Esophagus squamous epithelium (tissue), 5 donors: ENCODE measurements at regions of chr14 and their contacts with region 1.

Region 1: GRCh38 chr14:55277972-55278740 is 6.9 kb downstream of the FBXO34 start:
- DNase-seq: no peak
- H3K4me3 ChIP-seq: no peak overlapping the region
- H3K27ac ChIP-seq: peak overlapping the region in 1 of 4 donors; percentile 28
- H3K4me1 ChIP-seq: peaks cover 12 to 56% (median 19%) of the 10 kb centered on the region in 3 donors
- H3K27me3 ChIP-seq: no peaks in the 10 kb centered on the region
- CTCF ChIP-seq: no peak
- POLR2A ChIP-seq: no peak

Region 2: DNA sequence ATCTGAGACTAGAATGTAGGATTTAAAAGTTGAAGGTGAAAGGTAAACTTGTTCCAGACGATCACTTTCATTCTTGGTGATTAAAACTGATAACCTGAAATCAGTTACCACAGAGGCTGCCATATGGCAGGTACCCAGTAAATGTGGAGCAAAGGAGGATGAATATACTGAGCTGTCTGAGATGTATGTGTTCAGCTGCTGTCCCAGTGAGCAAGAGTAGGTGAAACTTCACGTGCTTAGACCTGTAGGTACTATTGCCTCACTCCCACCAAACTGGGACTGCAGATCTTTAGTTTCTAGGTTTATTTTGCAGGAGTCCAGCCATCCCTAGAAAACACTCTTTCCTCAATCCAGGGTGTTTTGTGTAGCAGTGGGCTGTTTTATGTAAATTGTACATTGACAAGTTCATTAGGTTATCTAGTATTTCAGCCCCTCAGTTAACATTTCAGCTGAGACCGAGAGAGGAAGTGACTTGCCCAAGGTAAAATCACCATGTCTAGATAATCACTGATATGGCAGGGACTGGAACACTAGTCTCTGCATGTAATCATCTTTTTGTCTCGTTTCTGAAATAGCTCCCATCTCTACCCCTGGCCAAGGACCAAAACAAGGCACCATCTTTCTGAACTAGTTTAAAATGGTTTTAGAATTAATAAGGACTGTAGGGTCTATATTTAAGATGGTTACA is 70.8 kb after region 1 on chr14:
- intact Hi-C with region 1: loop called (anchors 2 kb)
- DNase-seq: no peak
- H3K4me3 ChIP-seq: no peak overlapping the region
- H3K27ac ChIP-seq: peak overlapping the region in 2 of 4 donors; percentile 39 to 52
- H3K4me1 ChIP-seq: peaks cover 6 to 62% (median 14%) of the 10 kb centered on the region in 3 donors
- H3K27me3 ChIP-seq: no peaks in the 10 kb centered on the region
- CTCF ChIP-seq: no peak
- POLR2A ChIP-seq: no peak

Region 3: GRCh38 chr14:55430024-55430690 is 152.0 kb after region 1 on chr14:
- intact Hi-C with region 1: no loop called
- DNase-seq: no peak
- H3K4me3 ChIP-seq: no peak overlapping the region
- H3K27ac ChIP-seq: peak overlapping the region in 2 of 4 donors; percentile 29 to 45
- H3K4me1 ChIP-seq: peaks cover 0 to 15% (median 0%) of the 10 kb centered on the region in 3 donors
- H3K27me3 ChIP-seq: no peaks in the 10 kb centered on the region
- CTCF ChIP-seq: peak in 5 of 6 experiments; percentile 3 to 62 (median 26)
- POLR2A ChIP-seq: no peak